Activated B cell treated with CpG ODN at 0.5 μM for 24 hours (primary cell): ENCODE measurements at regions of chr4 and their contacts with region 1.

Region 1: DNA sequence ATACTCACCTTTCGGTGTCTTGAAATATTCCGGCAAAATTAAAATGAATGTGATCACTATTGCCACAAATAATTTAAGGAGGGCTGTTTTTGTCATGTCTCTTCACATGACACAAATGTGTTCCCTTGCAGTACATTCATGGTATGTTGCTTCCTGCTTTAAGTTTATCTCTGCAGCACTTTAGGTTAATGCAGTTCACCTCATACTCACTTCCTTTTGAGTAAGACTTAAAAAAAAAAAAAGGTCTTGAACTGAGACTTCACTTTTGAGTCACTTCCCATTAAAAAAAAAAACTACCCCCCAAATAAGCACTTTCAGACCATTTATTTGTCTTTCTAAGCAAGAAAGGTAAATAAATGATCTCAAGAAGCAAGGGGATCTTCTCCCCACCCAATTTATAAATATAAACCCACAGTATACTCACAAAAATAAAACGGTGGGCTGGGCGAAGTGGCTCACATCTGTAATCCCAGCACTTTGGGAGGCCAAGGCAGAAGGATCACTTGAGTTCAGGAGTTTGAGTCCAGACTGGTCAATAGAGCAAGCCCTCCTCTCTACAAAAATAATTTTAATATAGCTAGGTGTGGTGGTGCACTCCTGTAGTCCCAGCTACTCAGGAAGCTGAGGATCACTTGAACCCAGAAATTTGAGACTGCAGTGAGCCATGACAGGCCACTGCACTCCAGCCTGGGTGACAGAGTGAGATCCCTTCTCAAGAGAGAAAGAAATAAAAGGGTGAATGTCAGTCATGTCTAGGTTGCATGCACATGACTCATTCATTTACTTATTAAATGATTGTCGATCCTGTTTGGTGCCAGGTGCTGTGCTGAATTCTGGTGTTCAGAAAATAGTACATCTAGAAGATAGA is at the start of gene TMEM156:
- DNase-seq: no peak
- ATAC-seq: peak; percentile 69
- H3K4me3 Mint-ChIP-seq: peak within 1 kb of the TSS; percentile 83
- H3K27ac Mint-ChIP-seq: peak within 1 kb of the TSS; percentile 93
- H3K4me1 Mint-ChIP-seq: peaks cover 64% of the 10 kb centered on the region
- H3K27me3 Mint-ChIP-seq: no peaks in the 10 kb centered on the region
- CTCF ChIP-seq: no peak
- total RNA-seq, gene TMEM156: 26.0 and 29.5 TPM in 2 replicates

Region 2: GRCh38 chr4:38743866-38744265 is 288.6 kb before region 1 on chr4:
- CTCF ChIA-PET with region 1: no interaction called
- POLR2A ChIA-PET with region 1: no interaction called
- intact Hi-C with region 1: no loop called
- DNase-seq: no peak
- ATAC-seq: no peak
- H3K4me3 Mint-ChIP-seq: peak overlapping the region; percentile 29
- H3K27ac Mint-ChIP-seq: peak overlapping the region; percentile 30
- H3K4me1 Mint-ChIP-seq: peaks cover 11% of the 10 kb centered on the region
- H3K27me3 Mint-ChIP-seq: no peaks in the 10 kb centered on the region
- CTCF ChIP-seq: no peak

Region 3: DNA sequence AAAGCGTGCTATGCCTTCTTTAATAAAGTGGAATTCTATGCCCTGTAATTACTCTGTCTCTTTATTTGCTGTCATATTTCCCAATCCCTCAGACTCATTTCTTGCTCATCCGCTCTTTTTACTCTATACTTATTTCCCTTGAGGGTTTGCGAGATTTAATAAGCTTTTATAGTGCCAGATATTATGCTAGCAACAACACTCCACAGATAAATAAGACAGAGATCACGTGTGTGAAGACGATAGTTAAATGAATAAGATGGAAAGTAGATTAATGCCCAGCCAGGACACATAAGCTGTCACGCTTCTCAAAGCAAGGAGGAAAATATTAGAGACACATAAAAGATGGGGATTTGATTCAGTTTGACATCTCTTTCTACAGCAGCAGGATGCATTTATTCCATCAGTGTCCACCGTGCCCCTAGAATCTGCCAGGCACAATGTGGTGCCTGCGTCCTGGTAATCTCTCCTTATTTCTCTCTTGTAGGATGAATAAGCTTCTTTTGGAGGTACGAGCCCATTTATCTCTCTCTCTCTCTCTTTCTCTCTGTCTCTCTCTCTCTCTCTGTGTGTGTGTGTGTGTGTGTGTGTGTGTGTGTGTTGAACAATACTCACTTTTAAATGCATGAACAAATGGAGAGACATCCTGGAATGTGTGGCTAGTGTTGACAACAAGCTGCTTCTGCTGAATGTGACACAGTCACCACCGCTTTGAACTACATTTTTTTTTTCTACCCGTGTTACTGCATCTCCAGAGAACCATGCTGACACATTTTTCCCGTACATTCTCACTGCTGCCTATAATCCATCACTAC is 48.5 kb before region 1 on chr4:
- CTCF ChIA-PET with region 1: no interaction called
- POLR2A ChIA-PET with region 1: interaction called, 21 read pairs
- intact Hi-C with region 1: loop called (anchors 5 kb)
- DNase-seq: no peak
- ATAC-seq: no peak
- H3K4me3 Mint-ChIP-seq: no peak overlapping the region
- H3K27ac Mint-ChIP-seq: peak overlapping the region; percentile 25
- H3K4me1 Mint-ChIP-seq: peaks cover 53% of the 10 kb centered on the region
- H3K27me3 Mint-ChIP-seq: no peaks in the 10 kb centered on the region
- CTCF ChIP-seq: no peak

Region 4: GRCh38 chr4:39169426-39170185 is 137.2 kb after region 1 on chr4:
- CTCF ChIA-PET with region 1: no interaction called
- POLR2A ChIA-PET with region 1: no interaction called
- intact Hi-C with region 1: loop called (anchors 1 kb)
- DNase-seq: no peak
- ATAC-seq: no peak
- H3K4me3 Mint-ChIP-seq: no peak overlapping the region
- H3K27ac Mint-ChIP-seq: no peak overlapping the region
- H3K4me1 Mint-ChIP-seq: peaks cover 51% of the 10 kb centered on the region
- H3K27me3 Mint-ChIP-seq: no peaks in the 10 kb centered on the region
- CTCF ChIP-seq: no peak